PC-9 (cell line): ENCODE measurements at regions of chr17 and their contacts with region 1.

Region 1: GRCh38 chr17:45628019-45628418 is 137.5 kb upstream of the PLEKHM1 start:
- DNase-seq: no peak
- H3K4me3 ChIP-seq: no peak overlapping the region
- H3K27ac ChIP-seq: no peak overlapping the region
- H3K4me1 ChIP-seq: no peaks in the 10 kb centered on the region
- H3K27me3 ChIP-seq: no peaks in the 10 kb centered on the region
- CTCF ChIP-seq: no peak

Region 2: GRCh38 chr17:45584092-45585036 is 43.7 kb before region 1 on chr17:
- CTCF ChIA-PET with region 1: no interaction called
- POLR2A ChIA-PET with region 1: no interaction called
- intact Hi-C with region 1: no loop called
- DNase-seq: peak; percentile 42 to 60
- H3K4me3 ChIP-seq: peak overlapping the region; percentile 76
- H3K27ac ChIP-seq: no peak overlapping the region
- H3K4me1 ChIP-seq: peaks cover 20% of the 10 kb centered on the region
- H3K27me3 ChIP-seq: no peaks in the 10 kb centered on the region
- CTCF ChIP-seq: no peak

Region 3: DNA sequence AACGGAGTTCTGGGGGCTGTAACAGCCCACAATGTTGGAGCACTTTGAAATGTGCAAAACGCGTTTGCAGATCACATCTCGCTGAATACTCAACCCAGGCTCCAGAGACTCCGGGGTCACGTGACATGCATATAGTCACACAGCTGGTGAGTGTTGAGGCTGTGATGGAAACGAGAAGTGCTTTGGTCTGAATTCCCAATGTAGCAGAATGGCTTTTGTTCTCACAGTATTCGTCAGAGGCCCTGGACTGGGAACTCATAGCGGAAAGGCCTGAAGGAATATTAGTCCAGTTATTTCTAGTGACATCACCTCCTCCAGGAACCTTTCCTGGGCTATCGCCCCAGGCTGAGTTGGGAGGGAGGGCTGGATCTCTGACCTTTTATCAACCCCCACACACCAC is 60.3 kb after region 1 on chr17:
- CTCF ChIA-PET with region 1: no interaction called
- POLR2A ChIA-PET with region 1: no interaction called
- intact Hi-C with region 1: no loop called
- DNase-seq: no peak
- H3K4me3 ChIP-seq: no peak overlapping the region
- H3K27ac ChIP-seq: no peak overlapping the region
- H3K4me1 ChIP-seq: no peaks in the 10 kb centered on the region
- H3K27me3 ChIP-seq: peaks cover 88% of the 10 kb centered on the region
- CTCF ChIP-seq: no peak

Region 4: GRCh38 chr17:46135126-46135812 is 507.2 kb after region 1 on chr17:
- CTCF ChIA-PET with region 1: no interaction called
- POLR2A ChIA-PET with region 1: interaction called, 28 read pairs
- intact Hi-C with region 1: no loop called
- DNase-seq: no peak
- H3K4me3 ChIP-seq: no peak overlapping the region
- H3K27ac ChIP-seq: no peak overlapping the region
- H3K4me1 ChIP-seq: 0 out of 2 replicates have a peak, but pooled peaks cover 4% of the 10 kb centered on the region
- H3K27me3 ChIP-seq: no peaks in the 10 kb centered on the region
- CTCF ChIP-seq: no peak